ENCODE measurements at regions of chr1 and their contacts with region 1.

Region 1: GRCh38 chr1:27581823-27582243 is 22.1 kb downstream of the AHDC1 start:
- DNase-seq: no peak
- H3K4me3 ChIP-seq: no peak overlapping the region
- CTCF ChIP-seq: no peak

Region 2: GRCh38 chr1:27568300-27569087 is 13.3 kb before region 1 on chr1:
- CTCF ChIA-PET with region 1: interaction called, 13 read pairs
- POLR2A ChIA-PET with region 1: no interaction called
- DNase-seq: peak; percentile 10
- H3K4me3 ChIP-seq: peak overlapping the region; percentile 27; the same call in 1 of the 2 replicates
- CTCF ChIP-seq: peak; percentile 43

Region 3: GRCh38 chr1:27726174-27727044 is 144.6 kb after region 1 on chr1:
- CTCF ChIA-PET with region 1: no interaction called
- POLR2A ChIA-PET with region 1: no interaction called
- DNase-seq: no peak
- H3K4me3 ChIP-seq: peak overlapping the region; percentile 80
- CTCF ChIP-seq: no peak